ENCODE measurements at regions of chr13 and their contacts with region 1.

Region 1: GRCh38 chr13:42011691-42012391 is 36.6 kb upstream of the DGKH start:
- DNase-seq: peak in 2 of 4 donors; percentile 12 to 23
- ATAC-seq: no peak
- H3K4me3 ChIP-seq: no peak overlapping the region
- H3K27ac ChIP-seq: no peak overlapping the region
- H3K4me1 ChIP-seq: peaks cover 7% of the 10 kb centered on the region
- H3K27me3 ChIP-seq: no peaks in the 10 kb centered on the region
- CTCF ChIP-seq: no peak
- POLR2A ChIP-seq: no peak

Region 2: DNA sequence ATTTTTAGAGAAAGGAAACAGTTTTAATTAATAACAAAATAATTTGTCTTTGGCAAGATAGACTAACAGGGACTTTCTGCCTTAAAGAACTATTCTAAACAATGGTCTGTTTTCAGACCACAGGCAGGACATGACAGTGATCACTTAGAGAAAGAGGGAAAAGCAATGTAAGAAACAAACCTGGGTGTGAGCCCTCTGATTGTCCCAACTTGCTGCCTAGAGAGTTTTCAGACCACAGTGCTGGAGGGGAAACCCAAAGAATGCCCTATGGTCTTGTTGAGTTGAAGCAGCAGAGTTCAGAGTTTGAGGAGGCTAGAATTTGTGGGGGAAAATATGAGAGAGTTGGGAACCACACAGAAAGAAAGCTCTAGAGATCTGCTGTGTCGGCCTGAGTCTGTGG is 74.7 kb after region 1 on chr13:
- intact Hi-C with region 1: loop called (anchors 10 kb)
- DNase-seq: no peak
- ATAC-seq: no peak
- H3K4me3 ChIP-seq: no peak overlapping the region
- H3K27ac ChIP-seq: no peak overlapping the region
- H3K4me1 ChIP-seq: no peaks in the 10 kb centered on the region
- H3K27me3 ChIP-seq: no peaks in the 10 kb centered on the region
- CTCF ChIP-seq: no peak
- POLR2A ChIP-seq: no peak